Right ventricle myocardium inferior (tissue), 1 donor: ENCODE measurements at regions of chr16 and their contacts with region 1.

Region 1: GRCh38 chr16:57084257-57084770 is 8.1 kb upstream of the CPNE2 start:
- DNase-seq: peak; percentile 79
- ATAC-seq: peak; percentile 78

Region 2: DNA sequence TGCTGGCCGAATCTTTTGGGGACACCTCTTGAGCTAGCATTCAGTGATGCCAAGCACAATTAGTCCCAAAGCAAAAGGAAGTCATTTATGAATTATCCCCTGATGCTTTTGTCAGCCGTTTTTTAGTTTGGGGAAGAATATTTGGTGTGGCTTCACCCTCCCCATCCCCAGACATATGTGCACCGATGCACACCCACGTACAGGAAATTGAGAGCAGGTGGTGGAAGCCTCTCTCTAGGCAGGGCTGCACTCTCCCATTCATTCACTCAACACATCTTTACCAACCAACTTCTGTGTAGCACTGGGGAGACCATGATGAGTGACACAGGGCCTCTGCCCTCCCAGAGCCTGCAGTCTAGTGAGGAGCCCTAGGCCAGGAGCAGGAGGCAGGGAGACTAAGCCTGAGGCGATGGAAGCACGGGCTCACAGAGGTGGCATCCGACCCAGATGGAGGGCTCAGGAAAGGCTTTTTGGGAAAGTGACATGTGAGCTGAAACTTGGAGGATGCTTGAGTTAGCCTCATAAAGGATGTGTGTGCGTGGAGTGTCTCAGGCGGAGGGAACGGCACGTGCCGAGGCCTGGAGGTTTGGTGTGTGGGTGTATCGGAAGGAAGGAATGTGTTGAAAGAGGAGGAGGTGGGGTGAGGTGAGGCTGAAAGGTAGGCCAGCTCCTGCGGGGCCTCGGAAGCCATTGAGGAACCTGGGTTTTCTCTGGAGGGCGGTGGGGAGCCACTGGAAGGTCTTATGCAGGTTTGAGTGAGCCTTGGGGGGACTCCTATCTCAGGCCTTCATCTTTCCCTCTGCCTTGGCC is 57.7 kb after region 1 on chr16:
- intact Hi-C with region 1: no loop called
- DNase-seq: no peak
- ATAC-seq: no peak

Region 3: DNA sequence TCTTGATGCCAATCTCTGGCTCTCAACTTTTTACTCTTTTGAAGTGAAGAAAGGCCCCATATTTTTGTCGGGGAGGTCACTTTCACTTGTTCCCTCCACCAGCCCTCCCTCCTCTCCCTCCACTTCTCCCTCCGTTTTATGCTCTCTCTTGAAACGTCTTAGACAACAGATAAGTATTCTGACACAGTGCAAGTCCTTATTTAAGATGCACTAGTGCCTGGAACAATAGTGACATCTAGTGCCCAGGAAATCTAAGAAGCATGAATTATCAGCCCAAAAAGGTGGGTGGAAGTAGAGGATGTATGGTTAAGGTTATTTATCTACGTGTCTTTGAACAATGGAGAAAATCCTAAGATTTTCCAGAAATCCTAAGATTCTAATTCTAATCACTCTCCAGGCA is 83.6 kb after region 1 on chr16:
- intact Hi-C with region 1: loop called (anchors 1 kb)
- DNase-seq: no peak
- ATAC-seq: peak; percentile 77

Region 4: DNA sequence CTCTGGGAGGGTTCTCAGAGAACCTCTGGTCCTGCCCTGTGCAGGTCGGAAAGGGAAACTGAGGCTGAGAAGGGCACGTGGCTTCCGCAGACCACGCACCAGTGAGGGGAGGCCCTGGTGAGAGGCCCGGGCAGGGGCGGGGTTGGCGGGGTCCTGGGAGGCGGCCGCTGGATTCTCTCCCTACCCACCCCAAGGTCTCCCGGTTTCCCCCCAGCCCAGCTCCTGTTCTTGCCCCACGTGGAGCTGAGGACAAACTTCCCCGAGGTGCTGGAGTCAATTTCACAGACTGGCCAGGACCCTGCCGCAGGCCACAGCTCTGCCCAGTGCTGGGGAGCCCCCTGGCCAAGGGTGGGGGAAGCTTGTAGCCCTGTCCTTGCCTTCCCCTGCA is 331.8 kb after region 1 on chr16:
- intact Hi-C with region 1: loop called (anchors 5 kb)
- DNase-seq: no peak
- ATAC-seq: no peak